CD4-positive, alpha-beta memory T cell (primary cell): ENCODE measurements at regions of chr1 and their contacts with region 1.

Region 1: DNA sequence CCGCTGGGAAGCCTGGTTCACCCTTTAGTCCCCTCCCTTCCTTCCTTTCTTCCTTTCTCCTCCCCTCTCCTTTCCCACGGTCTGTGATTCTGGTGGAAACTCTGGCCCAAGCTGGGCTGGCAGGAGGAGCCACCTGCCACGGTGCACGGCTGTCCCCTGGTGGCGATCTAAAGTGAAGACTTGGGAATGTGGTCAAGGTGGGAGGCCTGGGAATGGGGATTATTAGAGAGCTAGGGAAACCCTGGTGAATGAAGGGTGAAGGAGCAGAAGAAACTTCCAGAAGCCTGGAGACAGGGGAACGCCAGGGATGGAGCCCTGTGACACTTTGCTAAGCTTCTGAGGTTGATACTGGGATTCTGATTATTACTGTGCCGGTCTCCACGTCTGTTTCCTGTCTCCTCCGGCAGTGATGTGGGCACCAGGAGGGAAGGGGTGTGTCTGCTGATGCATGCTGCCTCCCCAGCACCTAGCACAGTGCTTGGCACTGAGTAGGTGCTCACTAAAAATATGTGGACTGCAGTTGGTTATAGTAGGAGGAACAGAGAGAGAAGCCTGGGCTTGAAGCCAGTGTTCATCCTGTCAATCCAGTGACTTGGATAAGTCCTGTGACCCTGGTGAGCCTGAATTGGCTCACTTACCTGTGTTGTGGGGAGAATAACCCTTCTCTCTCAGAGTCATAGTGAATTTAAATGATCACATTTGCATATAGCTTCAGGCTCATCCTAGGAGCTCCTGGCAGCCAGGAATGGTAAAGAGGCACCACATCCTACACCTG is 71.2 kb upstream of the NBPF3 start:
- DNase-seq: peak in 4 of 5 donors; percentile 53 to 67 (median 56)
- H3K4me3 ChIP-seq: no peak overlapping the region
- H3K4me3 Mint-ChIP-seq: peak overlapping the region in 1 of 8 donors; percentile 51
- H3K27ac ChIP-seq: no peak overlapping the region
- H3K27ac Mint-ChIP-seq: peak overlapping the region in 3 of 7 donors; percentile 3 to 71 (median 23)
- H3K4me1 ChIP-seq: peaks cover 8% of the 10 kb centered on the region
- H3K4me1 Mint-ChIP-seq: peaks cover 9 to 16% (median 12%) of the 10 kb centered on the region in 4 donors
- H3K27me3 ChIP-seq: no peaks in the 10 kb centered on the region
- H3K27me3 Mint-ChIP-seq: no peaks in the 10 kb centered on the region

Region 2: DNA sequence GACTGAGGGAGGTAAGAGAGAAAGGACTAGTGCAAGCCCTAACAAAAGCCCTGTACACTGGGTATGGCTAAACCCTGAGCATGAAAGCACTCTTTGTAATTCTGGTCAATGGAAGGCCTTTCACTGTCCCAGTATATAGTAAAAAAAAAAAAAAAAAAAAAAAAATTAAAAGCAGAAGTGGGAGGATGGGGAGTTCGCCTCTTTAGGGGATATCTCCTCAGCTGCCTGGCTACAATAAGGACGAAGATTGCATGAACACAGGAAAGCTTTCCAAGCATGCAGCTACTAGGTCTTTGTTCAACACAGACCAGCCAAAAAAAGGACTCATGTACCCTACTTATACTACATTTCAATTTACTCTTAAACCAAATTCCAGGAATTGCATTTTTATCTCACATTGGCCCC is 251.1 kb before region 1 on chr1:
- CTCF ChIA-PET with region 1: no interaction called
- POLR2A ChIA-PET with region 1: no interaction called
- intact Hi-C with region 1: no loop called
- DNase-seq: no peak
- H3K4me3 ChIP-seq: no peak overlapping the region
- H3K4me3 Mint-ChIP-seq: no peak overlapping the region
- H3K27ac ChIP-seq: no peak overlapping the region
- H3K27ac Mint-ChIP-seq: no peak overlapping the region
- H3K4me1 ChIP-seq: no peaks in the 10 kb centered on the region
- H3K4me1 Mint-ChIP-seq: no peaks in the 10 kb centered on the region
- H3K27me3 ChIP-seq: no peaks in the 10 kb centered on the region
- H3K27me3 Mint-ChIP-seq: no peaks in the 10 kb centered on the region

Region 3: GRCh38 chr1:21232044-21232443 is 136.7 kb before region 1 on chr1:
- CTCF ChIA-PET with region 1: interaction called, 242 read pairs
- POLR2A ChIA-PET with region 1: interaction called, 9 read pairs
- intact Hi-C with region 1: loop called (anchors 1 kb)
- DNase-seq: peak in 4 of 5 donors; percentile 33 to 49 (median 39)
- H3K4me3 ChIP-seq: no peak overlapping the region
- H3K4me3 Mint-ChIP-seq: no peak overlapping the region
- H3K27ac ChIP-seq: no peak overlapping the region
- H3K27ac Mint-ChIP-seq: peak overlapping the region in 4 of 7 donors; percentile 6 to 77 (median 44)
- H3K4me1 ChIP-seq: no peaks in the 10 kb centered on the region
- H3K4me1 Mint-ChIP-seq: peaks cover 0 to 2% (median 0%) of the 10 kb centered on the region in 4 donors
- H3K27me3 ChIP-seq: no peaks in the 10 kb centered on the region
- H3K27me3 Mint-ChIP-seq: no peaks in the 10 kb centered on the region

Region 4: DNA sequence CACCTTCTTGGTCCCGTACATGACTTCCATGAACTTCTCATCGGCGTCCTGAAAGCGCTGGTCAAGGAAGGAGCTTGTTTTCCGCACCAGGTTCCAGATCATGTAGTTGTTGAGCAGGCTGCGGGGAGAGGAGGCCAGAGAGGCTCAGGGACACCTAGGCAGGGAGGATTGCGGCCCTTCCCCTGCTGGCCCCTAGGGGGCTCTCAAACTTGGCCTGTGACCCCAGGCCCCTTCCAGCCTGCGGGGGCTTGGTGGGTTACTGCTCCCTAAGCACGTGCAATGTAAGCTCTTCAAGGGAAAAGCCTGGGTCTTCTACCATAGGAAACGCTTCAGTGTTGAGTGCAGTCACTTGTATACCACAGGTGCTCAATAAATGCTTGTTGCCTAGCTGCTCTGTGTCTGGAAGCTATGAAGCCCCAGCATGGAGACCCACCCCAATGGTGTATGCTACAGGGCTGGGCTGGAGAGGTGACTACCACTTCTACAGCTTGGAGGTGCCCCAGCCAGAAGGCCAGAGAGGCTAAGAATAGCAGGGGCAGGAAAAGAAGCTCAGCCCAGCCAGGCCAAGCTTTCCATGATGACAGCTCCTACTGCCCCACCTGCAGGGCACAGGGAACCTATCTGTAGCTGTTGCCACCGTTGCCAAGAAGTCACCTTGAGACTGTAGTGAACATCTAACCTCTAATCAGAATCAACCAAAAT is 123.6 kb before region 1 on chr1:
- CTCF ChIA-PET with region 1: interaction called, 59 read pairs
- POLR2A ChIA-PET with region 1: interaction called, 7 read pairs
- intact Hi-C with region 1: no loop called
- DNase-seq: peak in 1 of 5 donors; percentile 10
- H3K4me3 ChIP-seq: no peak overlapping the region
- H3K4me3 Mint-ChIP-seq: no peak overlapping the region
- H3K27ac ChIP-seq: no peak overlapping the region
- H3K27ac Mint-ChIP-seq: peak overlapping the region in 3 of 7 donors; percentile 12 to 53 (median 50)
- H3K4me1 ChIP-seq: no peaks in the 10 kb centered on the region
- H3K4me1 Mint-ChIP-seq: peaks cover 0 to 3% (median under 1%) of the 10 kb centered on the region in 4 donors
- H3K27me3 ChIP-seq: no peaks in the 10 kb centered on the region
- H3K27me3 Mint-ChIP-seq: no peaks in the 10 kb centered on the region

Region 5: DNA sequence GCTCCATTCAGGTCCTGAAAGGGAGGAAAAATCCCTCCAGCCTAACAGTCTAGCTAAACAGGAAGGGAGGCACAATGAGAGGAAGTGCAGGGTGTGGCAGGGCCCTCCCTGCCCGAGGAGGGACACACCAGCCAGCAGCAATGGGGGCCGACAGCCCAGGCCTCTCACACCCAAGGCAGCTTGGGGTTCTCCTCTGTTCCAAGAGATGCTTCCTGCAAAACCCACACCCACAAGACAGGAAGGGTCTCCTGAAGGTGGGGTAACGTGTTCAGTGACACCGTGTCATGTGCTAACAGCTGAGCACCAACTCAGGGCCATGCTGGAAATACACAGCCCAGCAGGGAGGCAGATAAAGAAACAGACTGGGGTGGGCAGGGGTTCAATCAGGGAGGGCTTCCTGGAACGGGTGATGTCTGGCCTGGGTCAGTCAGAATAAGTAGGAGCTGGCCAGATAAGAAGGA is 88.7 kb before region 1 on chr1:
- CTCF ChIA-PET with region 1: interaction called, 16 read pairs
- POLR2A ChIA-PET with region 1: interaction called, 3 read pairs
- intact Hi-C with region 1: no loop called
- DNase-seq: no peak
- H3K4me3 ChIP-seq: peak overlapping the region in 1 of 2 donors; percentile 17
- H3K4me3 Mint-ChIP-seq: peak overlapping the region; percentile 76 to 90 (median 82)
- H3K27ac ChIP-seq: peak overlapping the region; percentile 61
- H3K27ac Mint-ChIP-seq: peak overlapping the region; percentile 95 to 99 (median 98)
- H3K4me1 ChIP-seq: peaks cover 43% of the 10 kb centered on the region
- H3K4me1 Mint-ChIP-seq: peaks cover 36 to 65% (median 51%) of the 10 kb centered on the region in 4 donors
- H3K27me3 ChIP-seq: no peaks in the 10 kb centered on the region
- H3K27me3 Mint-ChIP-seq: no peaks in the 10 kb centered on the region

Region 6: GRCh38 chr1:21324368-21325141 is 44.1 kb before region 1 on chr1:
- CTCF ChIA-PET with region 1: interaction called, 17 read pairs
- POLR2A ChIA-PET with region 1: interaction called, 6 read pairs
- intact Hi-C with region 1: no loop called
- DNase-seq: peak; percentile 24 to 82 (median 48)
- H3K4me3 ChIP-seq: peak overlapping the region; percentile 9 to 25
- H3K4me3 Mint-ChIP-seq: peak overlapping the region; percentile 65 to 93 (median 84)
- H3K27ac ChIP-seq: peak overlapping the region; percentile 36
- H3K27ac Mint-ChIP-seq: peak overlapping the region; percentile 92 to 96 (median 94)
- H3K4me1 ChIP-seq: peaks cover 71% of the 10 kb centered on the region
- H3K4me1 Mint-ChIP-seq: peaks cover 41 to 95% (median 75%) of the 10 kb centered on the region in 4 donors
- H3K27me3 ChIP-seq: no peaks in the 10 kb centered on the region
- H3K27me3 Mint-ChIP-seq: no peaks in the 10 kb centered on the region

Region 7: GRCh38 chr1:21468599-21468998 is 99.9 kb after region 1 on chr1:
- CTCF ChIA-PET with region 1: no interaction called
- POLR2A ChIA-PET with region 1: no interaction called
- intact Hi-C with region 1: no loop called
- DNase-seq: no peak
- H3K4me3 ChIP-seq: no peak overlapping the region
- H3K4me3 Mint-ChIP-seq: no peak overlapping the region
- H3K27ac ChIP-seq: no peak overlapping the region
- H3K27ac Mint-ChIP-seq: no peak overlapping the region
- H3K4me1 ChIP-seq: no peaks in the 10 kb centered on the region
- H3K4me1 Mint-ChIP-seq: peaks cover 0 to 8% (median 0%) of the 10 kb centered on the region in 4 donors
- H3K27me3 ChIP-seq: no peaks in the 10 kb centered on the region
- H3K27me3 Mint-ChIP-seq: no peaks in the 10 kb centered on the region

Region 8: GRCh38 chr1:21559788-21560567 is 191.3 kb after region 1 on chr1:
- CTCF ChIA-PET with region 1: no interaction called
- POLR2A ChIA-PET with region 1: no interaction called
- intact Hi-C with region 1: no loop called
- DNase-seq: no peak
- H3K4me3 ChIP-seq: no peak overlapping the region
- H3K4me3 Mint-ChIP-seq: no peak overlapping the region
- H3K27ac ChIP-seq: no peak overlapping the region
- H3K27ac Mint-ChIP-seq: no peak overlapping the region
- H3K4me1 ChIP-seq: no peaks in the 10 kb centered on the region
- H3K4me1 Mint-ChIP-seq: no peaks in the 10 kb centered on the region
- H3K27me3 ChIP-seq: no peaks in the 10 kb centered on the region
- H3K27me3 Mint-ChIP-seq: peaks cover 9 to 19% of the 10 kb centered on the region in 2 donors

Region 9: DNA sequence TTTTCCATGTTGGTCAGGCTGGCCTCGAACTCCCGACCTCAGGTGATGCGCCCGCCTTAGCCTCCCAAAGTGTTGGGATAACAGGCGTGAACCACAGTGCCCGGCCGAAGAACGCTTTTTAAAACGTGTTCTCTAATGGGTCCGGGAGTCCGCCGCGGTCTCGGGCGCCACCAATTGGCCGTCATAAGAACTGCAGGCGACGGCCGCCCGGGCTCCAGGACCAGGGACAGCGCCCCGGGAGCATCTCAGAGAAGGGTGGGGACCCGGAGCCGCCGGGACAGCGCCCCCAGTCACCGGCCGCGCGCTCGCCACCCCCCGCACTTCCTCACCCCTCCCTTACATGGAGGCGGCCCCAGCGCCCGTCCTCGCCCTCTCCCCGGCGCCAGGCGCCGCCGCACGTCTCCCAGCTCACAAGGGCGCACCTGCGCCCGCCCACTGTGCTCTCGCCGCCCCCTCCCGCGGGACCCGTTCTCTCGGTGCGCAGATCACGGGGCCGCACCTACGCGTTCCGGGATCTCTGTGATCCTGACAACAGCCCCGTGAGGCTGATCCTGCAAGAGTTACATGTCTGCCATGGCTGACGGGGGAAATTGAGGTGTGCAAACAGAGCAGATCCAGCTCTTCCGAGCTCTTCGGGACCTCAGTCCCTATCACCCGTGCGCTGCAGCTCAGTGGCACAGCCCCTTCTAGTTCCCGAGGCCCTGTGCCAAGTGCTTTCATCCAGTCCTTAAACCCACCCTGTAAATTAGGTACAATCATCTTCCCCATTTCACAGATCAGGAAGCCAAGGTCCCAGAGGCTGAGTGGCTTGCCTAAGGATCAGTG is 290.6 kb after region 1 on chr1:
- CTCF ChIA-PET with region 1: no interaction called
- POLR2A ChIA-PET with region 1: no interaction called
- intact Hi-C with region 1: loop called (anchors 2 kb)
- DNase-seq: peak; percentile 81 to 86 (median 83)
- H3K4me3 ChIP-seq: no peak overlapping the region
- H3K4me3 Mint-ChIP-seq: peak overlapping the region in 4 of 8 donors; percentile 31 to 65 (median 40)
- H3K27ac ChIP-seq: no peak overlapping the region
- H3K27ac Mint-ChIP-seq: peak overlapping the region in 2 of 7 donors; percentile 7 to 57
- H3K4me1 ChIP-seq: peaks cover 8% of the 10 kb centered on the region
- H3K4me1 Mint-ChIP-seq: peaks cover 0 to 7% (median 5%) of the 10 kb centered on the region in 4 donors
- H3K27me3 ChIP-seq: no peaks in the 10 kb centered on the region
- H3K27me3 Mint-ChIP-seq: peaks cover 9 to 15% of the 10 kb centered on the region in 2 donors